Activated CD4-positive, alpha-beta T cell treated with anti-CD3 and anti-CD28 coated beads for 36 hours (primary cell): ENCODE measurements at regions of chr6 and their contacts with region 1.

Region 1: DNA sequence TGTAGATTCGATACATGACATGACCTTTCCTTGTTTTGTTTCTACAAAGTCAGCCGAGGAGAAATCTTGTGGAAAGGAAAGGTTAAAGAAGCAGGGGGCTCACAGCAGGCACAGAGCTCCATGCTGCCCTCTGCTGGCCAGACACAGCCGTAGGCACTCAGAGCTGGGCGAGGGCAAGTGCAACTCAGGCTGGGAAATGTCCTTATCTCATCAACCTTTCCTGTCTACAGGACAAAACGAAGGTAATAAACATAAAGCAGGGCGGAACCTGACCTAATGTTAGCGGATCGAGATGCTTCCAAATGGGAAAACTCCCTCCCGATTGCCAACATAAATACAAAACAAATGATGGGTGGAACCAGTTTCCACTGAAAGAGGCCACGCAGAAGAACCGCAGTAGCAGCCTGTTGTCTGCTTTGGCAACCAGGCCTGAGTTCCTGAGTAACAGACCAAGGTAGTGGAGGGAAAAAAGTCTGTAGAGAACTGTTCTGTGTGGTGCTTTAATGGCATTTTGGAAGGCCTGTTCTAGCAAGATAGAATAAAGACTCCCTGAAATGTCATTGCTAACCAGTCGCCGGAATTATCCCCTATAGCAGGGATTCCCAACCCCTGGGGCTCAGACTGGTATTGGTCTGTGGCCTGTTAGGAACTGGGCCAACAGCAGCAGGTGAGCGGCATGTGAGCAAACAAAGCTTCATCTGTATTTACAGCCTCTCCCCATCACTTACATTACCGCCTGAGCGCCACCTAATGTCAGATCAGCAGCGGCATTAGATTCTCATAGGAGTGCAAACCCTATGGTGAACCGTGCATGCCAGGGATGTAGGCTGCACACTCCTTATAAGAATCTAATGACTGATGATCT is 85.2 kb downstream of the MBOAT1 start:
- DNase-seq: peak; percentile 82
- ATAC-seq: peak; percentile 74
- H3K4me3 Mint-ChIP-seq: no peak overlapping the region
- H3K27ac Mint-ChIP-seq: no peak overlapping the region
- H3K4me1 Mint-ChIP-seq: no peaks in the 10 kb centered on the region
- H3K27me3 Mint-ChIP-seq: no peaks in the 10 kb centered on the region

Region 2: DNA sequence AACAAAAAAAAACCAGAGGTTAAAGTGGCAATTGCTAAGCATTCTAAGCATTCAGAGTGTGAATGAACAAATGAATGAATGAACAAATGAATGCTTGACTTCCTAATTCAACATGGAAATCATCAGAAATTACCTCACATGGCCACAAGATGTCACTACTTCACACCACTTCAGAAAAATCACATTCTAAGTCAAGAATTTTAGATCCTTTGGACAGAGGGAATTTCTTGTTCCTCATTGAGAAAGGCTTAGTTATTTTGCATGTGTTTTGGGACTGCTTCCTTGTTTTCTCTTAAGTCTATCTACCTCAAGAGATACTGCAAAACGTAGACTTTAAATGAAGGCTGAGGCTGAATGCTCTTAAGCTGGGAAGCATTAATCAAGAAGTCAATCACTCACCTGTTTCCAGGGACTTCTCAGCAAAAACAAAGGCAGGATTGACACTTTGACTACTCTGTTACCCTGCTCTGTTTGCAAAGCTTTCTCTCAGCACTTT is 34.9 kb before region 1 on chr6:
- CTCF ChIA-PET with region 1: interaction called, 29 read pairs
- POLR2A ChIA-PET with region 1: no interaction called
- intact Hi-C with region 1: no loop called
- DNase-seq: no peak
- ATAC-seq: peak; percentile 23
- H3K4me3 Mint-ChIP-seq: no peak overlapping the region
- H3K27ac Mint-ChIP-seq: no peak overlapping the region
- H3K4me1 Mint-ChIP-seq: no peaks in the 10 kb centered on the region
- H3K27me3 Mint-ChIP-seq: no peaks in the 10 kb centered on the region

Region 3: GRCh38 chr6:20109526-20109925 is 17.5 kb before region 1 on chr6:
- CTCF ChIA-PET with region 1: interaction called, 11 read pairs
- POLR2A ChIA-PET with region 1: no interaction called
- intact Hi-C with region 1: no loop called
- DNase-seq: no peak
- ATAC-seq: no peak
- H3K4me3 Mint-ChIP-seq: no peak overlapping the region
- H3K27ac Mint-ChIP-seq: no peak overlapping the region
- H3K4me1 Mint-ChIP-seq: no peaks in the 10 kb centered on the region
- H3K27me3 Mint-ChIP-seq: no peaks in the 10 kb centered on the region

Region 4: GRCh38 chr6:20162515-20162914 is 35.5 kb after region 1 on chr6:
- CTCF ChIA-PET with region 1: no interaction called
- POLR2A ChIA-PET with region 1: no interaction called
- intact Hi-C with region 1: no loop called
- DNase-seq: no peak
- ATAC-seq: no peak
- H3K4me3 Mint-ChIP-seq: no peak overlapping the region
- H3K27ac Mint-ChIP-seq: no peak overlapping the region
- H3K4me1 Mint-ChIP-seq: no peaks in the 10 kb centered on the region
- H3K27me3 Mint-ChIP-seq: no peaks in the 10 kb centered on the region

Region 5: DNA sequence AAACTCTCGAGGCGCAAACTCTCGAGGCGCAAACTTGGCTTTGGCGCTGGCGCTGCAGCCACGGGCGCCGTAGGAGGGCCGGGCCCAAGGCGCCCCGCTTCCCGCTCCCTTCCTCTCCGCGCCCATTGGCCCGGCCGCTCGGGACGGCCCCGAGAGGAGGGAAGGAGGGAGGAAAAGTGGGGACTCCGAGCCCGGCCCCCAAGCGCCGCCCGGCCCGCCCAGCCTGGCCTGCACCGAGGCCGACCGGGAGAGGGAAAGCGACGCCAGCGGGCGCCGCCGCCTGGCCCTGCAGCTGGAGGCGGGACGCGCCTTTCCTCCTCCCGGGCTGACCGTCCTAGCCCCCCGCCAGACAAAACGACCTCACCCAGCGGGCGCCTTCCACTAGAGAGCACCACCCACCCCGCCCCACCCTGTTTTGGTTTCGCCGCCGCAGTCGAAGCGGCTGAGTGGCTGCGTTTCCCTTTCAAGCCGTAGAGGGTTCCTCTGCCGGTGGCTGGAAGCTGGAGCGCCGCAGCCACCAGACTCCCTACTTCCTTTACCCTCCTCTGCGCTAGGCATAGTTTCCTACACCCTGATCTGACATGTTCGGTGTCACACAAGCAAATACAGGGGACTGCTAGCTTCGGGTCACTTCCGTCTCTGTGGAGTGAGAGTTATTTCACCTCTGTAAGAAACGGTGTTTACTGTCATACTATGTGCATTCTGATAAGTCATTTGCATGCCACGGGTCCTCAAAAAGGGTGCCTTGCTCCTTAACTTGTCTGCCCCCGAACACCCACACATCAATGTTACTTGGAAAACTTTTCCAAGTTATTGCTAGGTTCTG is 85.6 kb after region 1 on chr6 and contains the start of gene MBOAT1:
- CTCF ChIA-PET with region 1: interaction called, 7 read pairs
- POLR2A ChIA-PET with region 1: no interaction called
- intact Hi-C with region 1: loop called (anchors 1 to 5 kb)
- DNase-seq: peak; percentile 85
- ATAC-seq: peak; percentile 89
- H3K4me3 Mint-ChIP-seq: peak within 1 kb of the TSS; percentile 95
- H3K27ac Mint-ChIP-seq: peak within 1 kb of the TSS; percentile 97
- H3K4me1 Mint-ChIP-seq: peaks cover 37% of the 10 kb centered on the region
- H3K27me3 Mint-ChIP-seq: no peaks in the 10 kb centered on the region
- total RNA-seq, gene MBOAT1: 13.3 to 16.1 TPM